Sigmoid colon (tissue), 7 donors: ENCODE measurements at regions of chr11 and their contacts with region 1.

Region 1: GRCh38 chr11:17207317-17208258 is at the start of gene PIK3C2A:
- DNase-seq: peak; percentile 98
- H3K4me3 ChIP-seq: peak within 1 kb of the TSS; percentile 69 to 96 (median 80)
- H3K27ac ChIP-seq: peak within 1 kb of the TSS; percentile 90 to 98 (median 94)
- H3K4me1 ChIP-seq: peaks cover 0 to 27% (median 18%) of the 10 kb centered on the region in 4 donors
- H3K27me3 ChIP-seq: no peaks in the 10 kb centered on the region
- CTCF ChIP-seq: no peak
- EP300 ChIP-seq: no peak
- POLR2A ChIP-seq: peak; percentile 90 to 94
- total RNA-seq, gene PIK3C2A: 52.9 to 72.6 (median 65.7) TPM

Region 2: DNA sequence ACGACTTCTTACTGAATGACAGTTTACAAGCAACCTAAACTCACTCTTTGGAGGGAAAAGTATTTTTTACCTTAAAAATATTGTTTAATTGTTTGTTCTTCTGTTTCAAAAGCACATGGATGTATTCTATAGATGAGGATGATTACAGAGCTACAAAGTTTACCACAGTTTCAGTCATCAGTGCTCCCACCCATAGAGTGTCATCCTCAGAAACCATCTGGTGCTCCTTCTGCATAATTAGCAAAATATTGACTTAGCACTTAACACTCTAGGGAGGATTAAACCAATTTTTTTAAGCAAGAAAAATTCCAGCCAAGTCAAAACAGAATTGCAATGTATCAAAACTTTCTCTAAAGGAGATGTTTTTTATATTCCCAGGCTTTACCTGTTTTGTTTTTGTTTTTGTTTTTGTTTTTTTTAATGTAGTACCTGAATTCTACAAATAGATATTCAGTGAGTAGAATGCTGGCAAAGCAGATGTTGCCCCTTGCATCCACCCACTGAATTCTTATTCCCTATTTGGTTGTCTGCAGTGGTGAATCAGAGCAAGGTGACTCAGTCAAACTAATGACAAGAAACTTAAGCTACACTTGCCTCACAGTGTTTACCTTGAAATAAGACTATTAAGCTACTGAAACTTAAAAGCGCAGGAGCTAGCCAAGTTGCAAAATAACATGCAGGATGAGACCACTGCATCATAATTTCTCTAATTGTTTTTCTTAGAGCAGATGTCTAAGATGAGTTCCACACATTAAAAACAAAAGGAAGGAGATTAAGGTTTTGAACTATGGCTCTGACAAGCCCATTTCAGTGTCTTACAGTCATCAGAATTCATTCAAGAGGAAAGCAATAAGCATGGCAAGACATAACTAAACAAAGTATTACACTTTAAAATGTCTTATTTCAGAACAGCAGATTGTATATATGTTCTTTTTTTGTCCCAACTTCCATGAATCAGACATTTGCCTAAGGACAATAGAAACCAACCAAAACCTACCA is 696.2 kb before region 1 on chr11:
- intact Hi-C with region 1: no loop called
- DNase-seq: no peak
- H3K4me3 ChIP-seq: no peak overlapping the region
- H3K27ac ChIP-seq: no peak overlapping the region
- H3K4me1 ChIP-seq: no peaks in the 10 kb centered on the region
- H3K27me3 ChIP-seq: no peaks in the 10 kb centered on the region
- CTCF ChIP-seq: no peak
- EP300 ChIP-seq: no peak
- POLR2A ChIP-seq: no peak

Region 3: DNA sequence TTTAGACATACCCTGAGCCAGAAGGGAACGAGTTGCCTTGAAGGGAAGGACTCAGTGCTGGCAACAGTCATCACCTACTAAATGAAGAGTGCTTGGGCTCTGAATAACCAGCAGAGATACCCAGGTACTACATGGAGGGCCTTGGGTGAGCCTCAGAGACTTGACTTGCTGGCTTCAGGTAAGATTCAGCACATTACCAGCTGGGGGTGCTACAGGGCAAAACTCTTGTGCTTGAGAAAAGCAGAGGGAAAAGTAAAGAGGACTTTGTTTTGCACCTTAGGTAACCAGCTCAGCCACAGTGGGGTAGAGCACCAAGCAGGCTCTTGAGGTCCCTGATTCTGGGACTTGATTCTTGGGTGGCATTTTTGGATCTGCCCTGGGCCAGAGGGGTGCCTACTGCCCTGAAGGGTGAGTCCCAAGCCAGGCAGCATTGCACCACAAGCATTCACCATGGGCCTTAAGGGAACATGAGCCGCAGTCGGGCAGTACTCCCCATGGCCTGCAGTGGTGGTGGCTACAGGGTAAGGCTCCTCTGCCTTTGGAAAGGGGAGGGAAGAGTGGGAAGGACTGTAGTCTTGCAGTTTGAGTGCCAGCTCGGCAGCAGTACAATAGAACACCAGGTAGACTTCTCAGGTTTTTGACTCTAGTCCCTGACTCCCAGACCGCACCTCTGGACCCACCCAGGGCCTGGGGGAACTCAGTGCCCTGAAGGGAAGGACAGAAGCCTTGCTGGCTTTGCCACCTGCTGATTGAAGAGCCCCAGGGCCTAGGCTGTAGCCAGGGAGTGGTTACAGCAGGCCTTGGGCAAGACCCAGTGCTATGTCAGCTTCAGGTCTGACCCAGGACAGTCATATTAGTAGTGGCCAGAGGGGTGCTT is 170.7 kb before region 1 on chr11:
- intact Hi-C with region 1: no loop called
- DNase-seq: no peak
- H3K4me3 ChIP-seq: no peak overlapping the region
- H3K27ac ChIP-seq: no peak overlapping the region
- H3K4me1 ChIP-seq: no peaks in the 10 kb centered on the region
- H3K27me3 ChIP-seq: no peaks in the 10 kb centered on the region
- CTCF ChIP-seq: no peak
- EP300 ChIP-seq: no peak
- POLR2A ChIP-seq: no peak

Region 4: GRCh38 chr11:17276236-17277023 is 68.8 kb after region 1 on chr11 and contains the start of gene NUCB2:
- intact Hi-C with region 1: loop called (anchors 1 kb)
- DNase-seq: peak; percentile 98
- H3K4me3 ChIP-seq: peak within 1 kb of the TSS; percentile 71 to 99 (median 88)
- H3K27ac ChIP-seq: peak within 1 kb of the TSS; percentile 89 to 96 (median 93)
- H3K4me1 ChIP-seq: peaks cover 0 to 8% (median 4%) of the 10 kb centered on the region in 4 donors
- H3K27me3 ChIP-seq: no peaks in the 10 kb centered on the region
- CTCF ChIP-seq: no peak
- EP300 ChIP-seq: no peak
- POLR2A ChIP-seq: peak; percentile 30 to 35
- total RNA-seq, gene NUCB2: 38.3 to 45.1 (median 39.4) TPM

Region 5: GRCh38 chr11:17354601-17354991 is 147.0 kb after region 1 on chr11:
- intact Hi-C with region 1: loop called (anchors 5 kb)
- DNase-seq: peak; percentile 72
- H3K4me3 ChIP-seq: no peak overlapping the region
- H3K27ac ChIP-seq: no peak overlapping the region
- H3K4me1 ChIP-seq: peaks cover 0 to 31% (median 23%) of the 10 kb centered on the region in 4 donors
- H3K27me3 ChIP-seq: no peaks in the 10 kb centered on the region
- CTCF ChIP-seq: peak in 3 of 4 experiments; percentile 38 to 54 (median 42)
- EP300 ChIP-seq: no peak
- POLR2A ChIP-seq: no peak

Region 6: DNA sequence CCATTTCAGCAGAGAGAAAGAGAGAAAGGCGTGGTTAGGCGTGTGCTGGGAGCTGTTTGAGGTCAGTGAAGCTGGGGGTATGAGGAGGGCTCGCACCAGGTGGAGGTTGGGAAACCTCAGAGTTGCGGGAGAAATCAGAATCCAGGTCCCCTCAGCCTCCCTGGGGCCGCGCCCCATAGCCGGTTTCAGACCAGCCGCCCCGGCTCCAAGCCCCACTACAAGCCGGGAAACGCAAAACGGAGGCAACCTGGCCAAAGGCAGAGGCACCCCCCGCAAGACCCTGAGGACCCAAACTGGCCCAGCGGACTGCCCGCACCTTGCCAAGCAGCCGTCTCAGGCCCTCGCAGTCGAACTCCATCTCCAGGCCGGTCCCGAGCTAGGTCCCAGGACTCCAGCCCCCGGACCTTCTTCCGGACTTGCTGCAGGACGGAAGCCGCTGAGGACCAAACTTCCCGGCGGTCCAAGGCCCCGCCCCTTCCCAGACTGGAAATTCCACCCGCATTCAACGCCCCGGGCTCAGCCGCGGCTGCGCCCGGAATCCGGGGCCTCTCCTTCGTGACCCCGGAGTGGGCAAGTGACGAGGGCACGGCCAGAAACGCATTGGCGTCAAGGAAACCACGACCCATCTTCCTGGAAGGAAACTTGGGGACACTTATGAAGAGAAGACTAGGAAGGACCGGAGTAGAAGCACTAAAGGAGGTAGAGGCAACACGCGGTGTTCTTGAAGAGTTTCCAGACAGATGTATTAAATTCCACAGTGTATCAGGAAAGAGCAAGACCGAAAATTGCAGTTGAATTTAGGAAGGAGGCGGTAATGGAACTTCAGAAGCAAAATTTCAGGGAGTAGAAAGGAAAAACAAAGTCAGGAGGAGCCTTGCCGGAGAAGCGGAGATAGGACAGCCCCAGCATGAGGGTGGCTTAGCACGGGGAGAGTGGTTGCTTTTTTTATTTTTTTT is 1381.0 kb after region 1 on chr11 and contains the start of gene UEVLD:
- intact Hi-C with region 1: loop called (anchors 5 kb)
- DNase-seq: peak; percentile 96
- H3K4me3 ChIP-seq: peak within 1 kb of the TSS; percentile 70 to 88 (median 84)
- H3K27ac ChIP-seq: peak within 1 kb of the TSS; percentile 85 to 88 (median 86)
- H3K4me1 ChIP-seq: peaks cover 0 to 40% (median 35%) of the 10 kb centered on the region in 4 donors
- H3K27me3 ChIP-seq: no peaks in the 10 kb centered on the region
- CTCF ChIP-seq: no peak
- EP300 ChIP-seq: peak in 1 of 4 donors; percentile 35
- POLR2A ChIP-seq: peak; percentile 72 to 75
- total RNA-seq, gene UEVLD: 22.3 to 40.3 (median 28.8) TPM